SK-N-SH (cell line): ENCODE measurements at regions of chr2 and their contacts with region 1.

Region 1: DNA sequence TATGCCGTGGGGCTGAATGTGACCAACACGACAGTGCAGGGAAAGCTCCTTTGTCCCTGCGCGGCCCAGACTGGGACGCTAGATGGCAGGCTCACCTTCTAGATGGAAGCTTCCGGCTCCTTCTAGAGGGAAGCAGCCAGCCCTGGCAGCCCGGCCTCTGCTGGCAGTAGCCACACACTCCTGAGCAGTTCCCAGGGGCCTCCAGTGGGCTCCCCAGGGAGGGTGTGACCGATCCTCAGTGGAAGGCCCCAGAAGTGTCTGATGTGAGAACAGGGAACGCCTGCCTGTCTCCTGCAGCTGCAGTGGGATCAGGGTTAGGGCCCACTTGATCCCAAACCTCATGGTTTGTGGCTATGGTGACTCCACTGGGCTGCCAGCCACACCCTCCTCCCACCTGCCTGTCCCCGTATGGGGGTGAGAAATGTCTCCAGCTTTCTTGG is 48.5 kb upstream of the LRPPRC start:
- DNase-seq: peak; percentile 90
- H3K4me3 ChIP-seq: no peak overlapping the region
- H3K27ac ChIP-seq: no peak overlapping the region
- H3K4me1 ChIP-seq: peaks cover 0 to 6% of the 10 kb centered on the region in 2 experiments; a peak in 1 of 4 replicates
- H3K27me3 ChIP-seq: no peaks in the 10 kb centered on the region
- CTCF ChIP-seq: peak; percentile 91
- EP300 ChIP-seq: peak in 1 of 2 experiments; percentile 76; a peak in 2 of 4 replicates
- RAD21 ChIP-seq: peak; percentile 97

Region 2: DNA sequence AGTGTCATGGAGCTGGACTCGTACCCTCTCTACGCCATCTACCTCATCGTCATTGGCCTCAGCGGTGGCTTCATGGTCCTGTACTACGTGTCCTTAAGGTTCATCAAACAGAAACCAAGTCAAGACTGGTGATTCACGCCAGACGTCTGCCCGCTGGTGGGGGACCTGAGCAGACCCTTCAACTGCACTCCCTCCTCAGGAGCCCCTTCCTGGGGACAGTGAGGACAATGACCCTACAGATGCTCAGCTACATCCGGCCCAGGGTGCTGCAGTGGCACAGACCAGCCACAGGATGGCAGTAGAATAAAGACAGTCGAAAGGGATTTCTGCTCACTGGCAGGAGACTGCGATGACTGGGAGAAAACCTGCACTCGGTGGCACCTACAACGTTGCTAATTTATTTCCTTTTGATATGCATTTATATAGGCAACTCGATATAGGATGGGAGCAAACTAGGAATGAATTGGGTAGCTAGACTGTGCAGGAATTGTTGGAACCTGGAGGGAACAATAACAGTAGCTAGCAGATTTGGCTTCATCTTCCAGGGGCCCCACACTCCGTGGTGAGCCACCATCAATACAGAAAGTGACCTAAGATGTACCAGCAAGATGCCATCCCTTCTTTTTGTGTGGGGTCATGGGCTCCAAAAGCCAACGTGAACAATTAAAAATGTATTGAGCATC is 166.4 kb before region 1 on chr2:
- CTCF ChIA-PET with region 1: interaction called, 11 read pairs
- POLR2A ChIA-PET with region 1: no interaction called
- DNase-seq: peak; percentile 87
- H3K4me3 ChIP-seq: peak overlapping the region in 1 of 2 experiments; percentile 38; a peak in 1 of 4 replicates
- H3K27ac ChIP-seq: no peak overlapping the region
- H3K4me1 ChIP-seq: peaks cover 0 to 7% of the 10 kb centered on the region in 2 experiments; a peak in 1 of 4 replicates
- H3K27me3 ChIP-seq: no peaks in the 10 kb centered on the region; the same call in 1 of the 2 replicates
- CTCF ChIP-seq: peak; percentile 98
- EP300 ChIP-seq: no peak
- RAD21 ChIP-seq: peak; percentile 96

Region 3: GRCh38 chr2:44071454-44072046 is 27.2 kb after region 1 on chr2:
- CTCF ChIA-PET with region 1: interaction called, 19 read pairs
- POLR2A ChIA-PET with region 1: no interaction called
- DNase-seq: no peak
- H3K4me3 ChIP-seq: no peak overlapping the region
- H3K27ac ChIP-seq: no peak overlapping the region
- H3K4me1 ChIP-seq: no peaks in the 10 kb centered on the region; a peak in 1 of 4 replicates
- H3K27me3 ChIP-seq: no peaks in the 10 kb centered on the region; the same call in 1 of the 2 replicates
- CTCF ChIP-seq: no peak
- EP300 ChIP-seq: no peak
- RAD21 ChIP-seq: no peak

Region 4: DNA sequence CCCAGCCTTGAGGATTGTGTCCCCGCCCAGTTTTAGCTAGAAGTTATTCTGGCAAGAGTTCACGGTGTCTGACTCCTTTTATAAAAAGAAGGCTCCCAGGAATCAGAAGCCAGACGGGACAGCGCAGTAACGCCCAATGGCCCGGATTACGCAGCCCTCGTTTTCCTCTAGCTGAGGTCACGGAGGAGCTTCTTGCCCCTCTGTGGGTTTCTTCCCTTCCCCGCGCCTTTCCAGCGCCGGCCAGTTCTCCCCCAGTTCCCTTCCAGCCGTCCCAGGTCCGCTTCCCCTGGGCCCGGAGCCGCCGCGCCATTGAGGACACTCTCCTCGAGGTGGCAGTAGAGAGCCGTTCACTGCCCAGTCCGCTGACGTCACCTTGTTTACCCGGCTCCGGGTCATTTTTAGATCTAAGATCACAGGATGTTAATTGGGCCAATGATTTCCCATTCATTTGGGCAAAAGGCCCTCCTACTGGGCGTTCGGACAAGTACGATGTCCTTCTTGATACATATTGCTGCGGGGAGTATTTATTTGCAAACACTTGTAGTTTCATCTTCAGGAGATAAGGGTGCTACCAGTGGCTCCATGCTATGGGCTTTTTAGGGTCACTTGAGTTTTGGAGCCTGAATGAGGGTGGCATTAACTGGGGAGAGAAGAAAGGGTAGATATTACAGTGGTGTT is 42.9 kb after region 1 on chr2:
- CTCF ChIA-PET with region 1: interaction called, 18 read pairs
- POLR2A ChIA-PET with region 1: no interaction called
- DNase-seq: peak; percentile 92
- H3K4me3 ChIP-seq: peak overlapping the region; percentile 42 to 62
- H3K27ac ChIP-seq: no peak overlapping the region; a peak in 1 of 4 replicates
- H3K4me1 ChIP-seq: peaks cover 0 to 13% of the 10 kb centered on the region in 2 experiments; a peak in 1 of 4 replicates
- H3K27me3 ChIP-seq: no peaks in the 10 kb centered on the region
- CTCF ChIP-seq: peak; percentile 99
- EP300 ChIP-seq: no peak
- RAD21 ChIP-seq: peak; percentile 94

Region 5: DNA sequence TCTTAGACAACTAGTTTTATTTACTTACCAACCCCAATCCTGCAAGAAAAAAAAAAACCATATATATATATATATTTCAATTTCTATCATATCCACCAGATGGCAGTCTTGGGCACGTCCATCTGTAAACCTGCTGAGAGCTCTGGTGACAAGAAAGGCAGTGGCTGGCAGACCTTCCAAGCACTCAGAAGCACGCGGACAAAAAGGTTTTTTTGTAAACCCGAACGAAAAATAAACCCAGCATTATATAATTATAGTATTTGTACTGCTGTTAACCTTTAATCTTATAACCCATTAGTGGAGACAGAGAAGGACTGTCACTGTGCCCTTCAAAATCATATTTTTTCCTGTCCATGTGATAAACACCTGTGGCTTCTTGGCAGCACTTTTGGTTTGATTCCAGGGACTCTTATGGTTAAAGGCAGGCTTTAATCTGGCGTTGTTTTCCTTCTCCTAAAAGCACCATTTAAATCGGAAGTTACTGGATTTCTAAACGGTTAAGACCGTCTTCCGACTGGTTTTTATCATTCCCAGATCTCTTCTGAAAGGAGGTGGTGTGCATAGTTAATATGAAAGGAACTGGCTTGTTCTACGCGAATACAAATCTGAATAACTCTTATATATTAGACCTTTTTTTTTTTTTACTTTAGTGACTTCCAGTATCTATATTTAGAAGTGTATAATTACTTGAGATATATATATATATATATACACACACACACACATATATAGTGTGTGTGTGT is 200.0 kb after region 1 on chr2:
- CTCF ChIA-PET with region 1: interaction called, 15 read pairs
- POLR2A ChIA-PET with region 1: no interaction called
- DNase-seq: peak; percentile 75
- H3K4me3 ChIP-seq: peak overlapping the region; percentile 43 to 55
- H3K27ac ChIP-seq: no peak overlapping the region
- H3K4me1 ChIP-seq: peaks cover 3 to 5% of the 10 kb centered on the region in 2 experiments; a peak in 2 of 4 replicates
- H3K27me3 ChIP-seq: no peaks in the 10 kb centered on the region
- CTCF ChIP-seq: peak; percentile 70
- EP300 ChIP-seq: no peak
- RAD21 ChIP-seq: peak; percentile 72

Region 6: GRCh38 chr2:44291281-44292248 is 247.3 kb after region 1 on chr2:
- CTCF ChIA-PET with region 1: interaction called, 49 read pairs
- POLR2A ChIA-PET with region 1: no interaction called
- DNase-seq: peak; percentile 76
- H3K4me3 ChIP-seq: peak overlapping the region; percentile 1 to 46; a peak in 2 of 4 replicates
- H3K27ac ChIP-seq: peak overlapping the region in 1 of 2 experiments; percentile 58; a peak in 2 of 4 replicates
- H3K4me1 ChIP-seq: peaks cover 6 to 15% of the 10 kb centered on the region in 2 experiments; a peak in 2 of 4 replicates
- H3K27me3 ChIP-seq: no peaks in the 10 kb centered on the region
- CTCF ChIP-seq: peak; percentile 83
- EP300 ChIP-seq: peak in 1 of 2 experiments; percentile 14; a peak in 1 of 4 replicates
- RAD21 ChIP-seq: peak; percentile 91

Region 7: DNA sequence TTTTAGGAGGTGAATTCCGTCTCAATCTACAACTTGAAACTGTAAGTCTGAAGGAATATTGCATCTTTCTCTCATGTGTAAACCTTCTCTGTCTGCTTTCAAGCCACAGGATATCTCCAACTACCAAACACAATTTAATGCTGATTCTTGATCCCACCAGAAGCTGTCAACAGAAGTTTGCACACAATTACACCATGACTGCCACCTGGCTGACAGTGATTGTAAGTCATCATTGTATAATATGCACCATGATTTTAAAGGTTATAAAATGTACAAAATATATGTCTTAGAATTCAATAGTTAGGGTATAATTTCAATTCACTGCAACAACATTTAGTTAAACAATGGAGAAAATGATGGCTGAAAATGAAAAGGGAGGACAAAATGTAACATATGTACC is 298.6 kb after region 1 on chr2:
- CTCF ChIA-PET with region 1: interaction called, 22 read pairs
- POLR2A ChIA-PET with region 1: no interaction called
- DNase-seq: peak; percentile 16
- H3K4me3 ChIP-seq: no peak overlapping the region
- H3K27ac ChIP-seq: no peak overlapping the region
- H3K4me1 ChIP-seq: peaks cover 0 to under 1% of the 10 kb centered on the region in 2 experiments; a peak in 2 of 4 replicates
- H3K27me3 ChIP-seq: no peaks in the 10 kb centered on the region
- CTCF ChIP-seq: peak; percentile 51
- EP300 ChIP-seq: no peak
- RAD21 ChIP-seq: peak; percentile 66